ENCODE measurements at regions of chr11 and their contacts with region 1.

Region 1: GRCh38 chr11:119057000-119057769 is at the start of gene HYOU1:
- DNase-seq: peak; percentile 95
- H3K4me3 ChIP-seq: peak within 1 kb of the TSS; percentile 74 to 98 (median 95)
- H3K27ac ChIP-seq: peak within 1 kb of the TSS; percentile 62
- H3K4me1 ChIP-seq: peaks cover 20% of the 10 kb centered on the region
- H3K27me3 ChIP-seq: no peaks in the 10 kb centered on the region
- CTCF ChIP-seq: peak in 1 of 2 donors; percentile 36
- total RNA-seq, gene HYOU1: 160 to 187 TPM

Region 2: DNA sequence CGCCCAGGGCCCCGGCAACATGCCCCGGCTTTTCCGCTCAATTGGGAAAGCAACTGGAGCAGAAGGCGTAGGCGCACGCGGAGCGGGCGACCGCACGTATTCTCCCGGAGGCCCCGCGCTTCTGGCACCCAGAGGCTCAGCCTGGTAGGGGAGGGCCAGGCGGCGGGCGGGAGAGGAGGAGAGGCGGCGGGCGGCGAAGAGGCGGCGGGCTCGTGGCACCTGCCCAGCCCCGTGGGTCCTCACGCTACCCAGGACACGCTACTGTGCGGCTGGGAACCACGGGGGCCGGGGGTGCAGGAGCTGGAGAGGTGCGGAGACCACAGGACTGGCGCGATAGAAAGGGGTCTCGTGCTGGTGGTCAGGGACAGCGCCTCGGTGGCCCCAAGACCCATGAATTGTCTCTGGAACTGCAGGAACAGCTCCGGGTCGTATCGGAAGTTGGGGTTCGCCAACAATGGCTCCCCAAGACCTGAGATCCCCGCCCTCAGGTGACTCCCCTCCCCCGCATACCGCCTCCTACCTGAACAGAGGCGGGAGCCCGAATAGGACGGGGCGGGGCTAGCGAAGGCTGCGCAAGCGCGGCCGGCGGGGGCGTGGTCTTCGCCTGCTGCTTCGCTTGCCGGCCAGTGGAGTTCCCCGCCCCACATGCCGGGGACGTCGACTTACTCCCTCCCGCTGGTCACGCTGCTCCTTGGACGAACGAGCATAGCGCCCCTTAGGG is 26.7 kb before region 1 on chr11 and contains the start of gene SLC37A4:
- CTCF ChIA-PET with region 1: no interaction called
- dilution Hi-C with region 1: no loop called
- in situ Hi-C with region 1: no loop called
- intact Hi-C with region 1: loop called (anchors 1 kb)
- DNase-seq: peak; percentile 96
- H3K4me3 ChIP-seq: peak within 1 kb of the TSS; percentile 78 to 97 (median 87)
- H3K27ac ChIP-seq: peak within 1 kb of the TSS; percentile 52
- H3K4me1 ChIP-seq: peaks cover 8% of the 10 kb centered on the region
- H3K27me3 ChIP-seq: no peaks in the 10 kb centered on the region
- CTCF ChIP-seq: peak in 1 of 2 donors; percentile 88
- total RNA-seq, gene SLC37A4: 15.8 to 16.7 TPM

Region 3: GRCh38 chr11:119741369-119742262 is 684.4 kb after region 1 on chr11:
- CTCF ChIA-PET with region 1: no interaction called
- dilution Hi-C with region 1: no loop called
- in situ Hi-C with region 1: no loop called
- intact Hi-C with region 1: no loop called
- DNase-seq: no peak
- H3K4me3 ChIP-seq: peak overlapping the region in 2 of 3 experiments; percentile 25 to 31
- H3K27ac ChIP-seq: no peak overlapping the region
- H3K4me1 ChIP-seq: peaks cover 10% of the 10 kb centered on the region
- H3K27me3 ChIP-seq: peaks cover 2% of the 10 kb centered on the region
- CTCF ChIP-seq: peak; percentile 59 to 84

Measured in mammary epithelial cell (primary cell).